ENCODE measurements at regions of chr7 and their contacts with region 1.

Region 1: DNA sequence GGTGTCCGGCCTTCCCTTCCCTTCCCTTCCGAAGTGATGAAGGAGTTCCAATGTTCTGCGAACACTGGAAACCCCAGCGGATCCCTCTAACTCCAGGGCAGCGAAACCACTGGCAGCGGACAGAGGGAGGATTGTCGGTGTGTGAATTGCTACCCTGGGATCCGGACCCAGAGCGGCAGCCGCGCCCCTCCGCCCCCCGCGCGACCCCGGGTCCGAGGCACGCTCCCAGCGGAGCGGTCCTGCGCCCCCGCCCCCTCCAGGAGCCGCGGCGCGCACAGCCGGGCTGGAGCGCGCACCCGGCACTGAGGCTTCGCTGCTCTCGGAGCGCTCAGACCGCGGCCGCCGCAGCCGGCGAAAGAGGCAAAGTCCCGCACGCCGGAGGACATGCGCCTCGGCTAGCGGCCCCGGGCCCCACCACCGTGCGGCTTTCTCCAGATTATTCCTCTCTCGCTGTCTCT is at the start of gene PTPRZ1:
- DNase-seq: no peak
- ATAC-seq: peak; percentile 98
- H3K4me3 ChIP-seq: peak within 1 kb of the TSS; percentile 50 to 75 (median 60)
- H3K27ac ChIP-seq: no peak within 1 kb of the TSS
- H3K4me1 ChIP-seq: peaks cover 11% of the 10 kb centered on the region
- H3K27me3 ChIP-seq: peaks cover 1 to 34% of the 10 kb centered on the region in 2 experiments; a peak in 3 of 5 replicates
- CTCF ChIP-seq: no peak
- EP300 ChIP-seq: no peak
- POLR2A ChIP-seq: no peak
- RAD21 ChIP-seq: no peak
- total RNA-seq, gene PTPRZ1: not detected in 2 replicates

Region 2: DNA sequence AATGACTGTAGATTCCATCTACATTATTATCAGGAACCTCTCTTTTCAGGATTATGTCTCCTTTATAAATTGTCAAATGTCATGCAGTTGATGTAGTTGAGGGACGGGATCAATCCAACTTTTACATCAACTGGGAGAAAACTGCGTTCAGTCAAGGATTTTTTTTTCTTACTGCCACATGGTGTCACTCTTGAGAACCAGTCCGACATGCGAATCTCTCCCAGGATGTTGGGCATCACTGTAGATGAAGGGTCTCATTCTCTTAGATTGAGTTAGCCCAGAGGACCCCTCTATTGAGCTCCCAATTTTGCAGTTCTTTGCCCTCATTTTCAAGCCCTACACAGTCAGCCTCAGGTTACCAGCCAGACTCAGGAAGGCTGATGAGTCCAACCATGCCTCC is 120.2 kb before region 1 on chr7:
- CTCF ChIA-PET with region 1: no interaction called
- POLR2A ChIA-PET with region 1: no interaction called
- in situ Hi-C with region 1: no loop called
- intact Hi-C with region 1: loop called (anchors 2 kb)
- DNase-seq: peak; percentile 5
- ATAC-seq: peak; percentile 50; the same call in 2 of the 3 replicates
- H3K4me3 ChIP-seq: no peak overlapping the region
- H3K27ac ChIP-seq: no peak overlapping the region
- H3K4me1 ChIP-seq: no peaks in the 10 kb centered on the region
- H3K27me3 ChIP-seq: no peaks in the 10 kb centered on the region; a peak in 1 of 5 replicates
- CTCF ChIP-seq: peak; percentile 66
- EP300 ChIP-seq: no peak
- POLR2A ChIP-seq: no peak
- RAD21 ChIP-seq: no peak

Region 3: DNA sequence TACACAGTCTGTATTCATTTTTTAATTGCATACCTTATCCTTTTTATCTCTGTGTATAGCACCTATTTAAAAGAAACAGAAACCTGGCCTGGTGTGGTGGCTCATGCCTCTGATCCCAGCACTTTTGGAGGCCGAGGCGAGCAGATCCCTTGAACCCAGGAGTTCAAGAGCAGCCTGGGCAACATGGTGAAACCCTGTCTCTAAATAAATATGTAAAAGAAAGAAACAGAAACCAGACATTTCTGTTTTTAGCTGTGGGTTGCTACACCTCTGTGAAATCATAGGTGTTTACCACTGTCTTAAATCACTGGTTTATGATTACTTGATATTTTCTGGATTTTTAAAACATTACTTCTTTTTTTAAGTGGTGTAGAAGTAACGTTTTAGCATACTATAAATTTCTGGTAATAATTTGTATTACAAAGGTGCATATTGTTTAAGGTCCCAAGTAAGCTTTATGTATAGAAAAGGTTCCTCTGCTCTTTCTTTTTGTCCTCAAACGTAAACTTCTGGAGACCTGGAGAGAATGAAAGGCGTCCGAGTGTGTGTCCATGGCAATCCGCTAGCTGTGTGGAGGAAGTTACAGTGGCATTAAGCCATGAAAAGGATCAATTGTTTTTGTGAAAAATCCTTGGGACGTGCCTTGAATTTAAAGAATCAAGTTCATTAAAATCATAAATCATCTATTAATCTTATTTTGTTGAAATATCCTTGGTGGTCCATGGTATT is 41.3 kb after region 1 on chr7:
- CTCF ChIA-PET with region 1: no interaction called
- POLR2A ChIA-PET with region 1: no interaction called
- in situ Hi-C with region 1: no loop called
- intact Hi-C with region 1: loop called (anchors 2 kb)
- DNase-seq: no peak
- ATAC-seq: no peak
- H3K4me3 ChIP-seq: no peak overlapping the region
- H3K27ac ChIP-seq: no peak overlapping the region
- H3K4me1 ChIP-seq: no peaks in the 10 kb centered on the region
- H3K27me3 ChIP-seq: no peaks in the 10 kb centered on the region
- CTCF ChIP-seq: no peak
- EP300 ChIP-seq: no peak
- POLR2A ChIP-seq: no peak
- RAD21 ChIP-seq: no peak

Measured in HepG2 (cell line).